ENCODE measurements at regions of chr14 and their contacts with region 1.

Region 1: DNA sequence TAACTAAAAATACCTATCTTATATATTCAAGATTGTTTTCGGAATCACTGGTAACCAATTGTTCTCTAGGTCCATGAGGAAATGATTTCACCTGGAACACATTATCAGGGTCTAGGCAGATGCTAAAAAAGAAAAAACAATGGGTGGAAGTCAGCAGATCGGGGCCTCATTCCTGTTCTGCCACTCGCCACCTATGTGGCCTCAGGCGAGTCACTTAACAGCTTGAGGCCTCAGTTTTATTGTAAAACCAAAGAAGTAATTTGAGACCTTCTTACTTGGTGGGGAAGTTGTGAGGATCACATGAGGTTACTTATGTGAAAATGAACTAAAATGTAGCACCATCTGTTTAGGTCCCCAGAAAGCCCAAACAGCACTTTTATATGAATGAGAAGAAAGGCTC is 6.2 kb upstream of the RNASE10 start:
- DNase-seq: peak; percentile 76
- H3K4me3 ChIP-seq: no peak overlapping the region
- H3K27ac ChIP-seq: peak overlapping the region; percentile 81
- H3K4me1 ChIP-seq: peaks cover 40% of the 10 kb centered on the region
- H3K27me3 ChIP-seq: no peaks in the 10 kb centered on the region
- CTCF ChIP-seq: no peak
- POLR2A ChIP-seq: no peak

Region 2: DNA sequence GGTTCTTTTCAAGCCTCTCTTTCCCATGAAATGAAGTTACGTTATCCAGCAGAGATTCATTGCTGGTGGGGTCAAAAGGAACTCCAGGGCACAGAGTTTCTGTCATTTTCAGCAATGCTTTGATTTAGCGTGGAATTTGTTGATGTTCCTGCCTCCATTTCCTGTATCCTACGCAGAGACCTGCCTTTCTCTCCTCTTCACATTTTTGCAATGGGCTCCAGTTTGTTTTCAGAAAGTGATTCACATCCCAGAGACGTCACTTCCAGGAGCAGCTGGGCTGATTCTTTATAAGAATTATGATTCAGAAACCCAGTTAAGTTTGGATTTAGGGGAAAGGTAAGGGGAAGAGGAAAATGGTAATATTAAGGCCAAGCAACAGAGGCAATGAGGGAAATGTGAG is 17.8 kb after region 1 on chr14:
- CTCF ChIA-PET with region 1: no interaction called
- POLR2A ChIA-PET with region 1: no interaction called
- dilution Hi-C with region 1: no loop called
- intact Hi-C with region 1: loop called (anchors 2 kb)
- DNase-seq: peak; percentile 82
- H3K4me3 ChIP-seq: peak overlapping the region in 1 of 3 experiments; percentile 2
- H3K27ac ChIP-seq: peak overlapping the region; percentile 81
- H3K4me1 ChIP-seq: peaks cover 31% of the 10 kb centered on the region
- H3K27me3 ChIP-seq: no peaks in the 10 kb centered on the region
- CTCF ChIP-seq: no peak
- POLR2A ChIP-seq: no peak

Region 3: GRCh38 chr14:20530771-20531571 is 31.9 kb after region 1 on chr14:
- CTCF ChIA-PET with region 1: no interaction called
- POLR2A ChIA-PET with region 1: no interaction called
- dilution Hi-C with region 1: no loop called
- intact Hi-C with region 1: loop called (anchors 2 kb)
- DNase-seq: peak; percentile 71
- H3K4me3 ChIP-seq: no peak overlapping the region
- H3K27ac ChIP-seq: no peak overlapping the region
- H3K4me1 ChIP-seq: no peaks in the 10 kb centered on the region
- H3K27me3 ChIP-seq: peaks cover 4 to 28% of the 10 kb centered on the region in 2 experiments
- CTCF ChIP-seq: peak; percentile 67 to 72
- POLR2A ChIP-seq: no peak

Measured in endothelial cell of umbilical vein (primary cell).